ENCODE measurements at regions of chr6 and their contacts with region 1.

Region 1: DNA sequence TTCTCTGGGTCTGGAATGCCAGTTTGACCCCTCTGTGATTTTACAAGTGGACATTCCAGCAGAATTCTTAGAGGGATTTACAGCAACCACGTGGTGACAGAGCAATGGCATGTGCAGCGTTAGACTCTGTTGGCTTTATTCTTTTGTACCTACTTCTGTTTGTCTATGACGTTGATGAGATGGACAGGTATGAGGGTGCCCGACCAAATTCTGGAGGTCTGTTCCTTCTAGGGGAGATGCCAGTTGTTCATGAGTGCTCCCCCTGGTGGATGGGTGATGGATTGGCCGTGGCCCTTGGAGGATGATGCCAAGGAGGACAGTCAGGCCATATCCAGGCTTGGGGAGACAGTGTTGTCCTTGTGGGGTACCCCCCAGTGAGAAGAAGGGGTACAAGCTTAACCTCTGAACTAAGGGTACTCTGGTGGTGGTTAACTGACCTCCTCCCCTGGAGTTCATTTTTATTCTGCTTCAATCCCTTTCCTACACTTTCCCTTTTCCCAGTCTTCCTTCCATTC is 198.6 kb downstream of the DTNBP1 start:
- DNase-seq: peak; percentile 68
- ATAC-seq: peak; percentile 84
- H3K4me3 Mint-ChIP-seq: no peak overlapping the region
- H3K27ac Mint-ChIP-seq: no peak overlapping the region
- H3K4me1 Mint-ChIP-seq: peaks cover 31% of the 10 kb centered on the region
- H3K27me3 Mint-ChIP-seq: no peaks in the 10 kb centered on the region

Region 2: GRCh38 chr6:15481390-15482291 is 17.4 kb after region 1 on chr6:
- CTCF ChIA-PET with region 1: interaction called, 14 read pairs
- POLR2A ChIA-PET with region 1: no interaction called
- DNase-seq: no peak
- ATAC-seq: peak; percentile 53
- H3K4me3 Mint-ChIP-seq: no peak overlapping the region
- H3K27ac Mint-ChIP-seq: no peak overlapping the region
- H3K4me1 Mint-ChIP-seq: peaks cover 26% of the 10 kb centered on the region
- H3K27me3 Mint-ChIP-seq: no peaks in the 10 kb centered on the region

Measured in activated CD8-positive, alpha-beta T cell treated with anti-CD3 and anti-CD28 coated beads, Interleukin-2, amount 10 ng/mL, durations not matched to agents 7 days and 5 days (primary cell).